Motor neuron (in vitro differentiated cells): ENCODE measurements at regions of chr9 and their contacts with region 1.

Region 1: GRCh38 chr9:94922098-94922607 is 195.7 kb downstream of the AOPEP start:
- ATAC-seq: peak in 6 of 8 experiments; percentile 8 to 61 (median 12)
- H3K4me3 ChIP-seq: no peak overlapping the region
- H3K27ac ChIP-seq: peak overlapping the region in 1 of 2 donors; percentile 20
- H3K4me1 ChIP-seq: peaks cover 41 to 45% of the 10 kb centered on the region in 2 donors

Region 2: GRCh38 chr9:94639061-94639998 is 282.8 kb before region 1 on chr9 and contains the start of gene FBP1:
- in situ Hi-C with region 1: no loop called
- ATAC-seq: peak; percentile 34 to 84 (median 71)
- H3K4me3 ChIP-seq: peak within 1 kb of the TSS in 4 of 5 donors; percentile 13 to 29 (median 22)
- H3K27ac ChIP-seq: no peak within 1 kb of the TSS
- H3K4me1 ChIP-seq: peaks cover 0 to 3% of the 10 kb centered on the region in 2 donors
- total RNA-seq, gene FBP1: 0.33 TPM in 2 of 8 experiments, not detected in the others

Region 3: GRCh38 chr9:94860968-94861871 is 60.9 kb before region 1 on chr9:
- in situ Hi-C with region 1: no loop called
- ATAC-seq: no peak
- H3K4me3 ChIP-seq: no peak overlapping the region
- H3K27ac ChIP-seq: no peak overlapping the region
- H3K4me1 ChIP-seq: peaks cover 14 to 16% of the 10 kb centered on the region in 2 donors

Region 4: GRCh38 chr9:95004411-95005277 is 82.5 kb after region 1 on chr9:
- in situ Hi-C with region 1: loop called in 1 of 9 experiments (anchors 25 kb)
- ATAC-seq: peak; percentile 72 to 93 (median 87)
- H3K4me3 ChIP-seq: peak overlapping the region; percentile 88 to 99 (median 94)
- H3K27ac ChIP-seq: peak overlapping the region; percentile 45 to 58
- H3K4me1 ChIP-seq: peaks cover 0 to 2% of the 10 kb centered on the region in 2 donors